Activated T-helper 1 cell treated with anti-CD3 and anti-CD28 coated beads, Interleukin-12 subunit alpha, Interleukin-12 subunit beta, Interleukin-2, Interleukin-4 antibody, amounts not matched to agents 30 ng/mL and 10 ng/mL and 1 ng/mL, durations not matched to agents 14 hours and 24 hours and 36 hours (primary cell): ENCODE measurements at regions of chr4 and their contacts with region 1.

Region 1: DNA sequence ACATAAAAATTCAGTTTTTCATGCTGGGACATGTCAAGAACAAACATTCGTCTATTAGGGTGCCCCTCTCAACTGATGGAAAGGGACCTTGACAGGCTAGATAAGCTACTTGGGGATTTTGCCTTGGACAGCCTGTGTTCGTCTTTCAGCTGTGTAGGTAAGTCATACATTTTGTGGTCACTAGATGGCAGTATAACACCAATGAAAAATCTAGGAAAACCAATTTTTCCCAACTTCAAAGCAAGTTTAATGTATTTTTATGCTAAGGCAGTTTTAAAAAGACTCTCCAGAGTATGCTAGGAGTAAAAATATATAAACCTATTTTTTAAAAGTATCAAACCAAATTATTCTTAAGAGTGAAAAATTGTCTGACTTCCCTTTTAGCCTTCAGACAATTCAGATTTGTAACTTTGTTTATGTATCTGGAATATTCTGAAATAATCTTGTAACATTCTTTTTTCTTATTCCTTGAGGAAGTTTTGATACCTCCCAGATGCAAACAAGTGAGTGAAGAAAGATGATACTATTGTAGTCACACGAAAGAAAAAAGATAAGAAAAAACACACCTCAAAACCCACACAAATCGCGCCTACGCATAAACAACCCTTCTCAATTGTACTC is 158.3 kb downstream of the CPE start:
- DNase-seq: no peak
- H3K4me3 Mint-ChIP-seq: no peak overlapping the region
- H3K27ac Mint-ChIP-seq: no peak overlapping the region
- H3K4me1 Mint-ChIP-seq: no peaks in the 10 kb centered on the region
- H3K27me3 Mint-ChIP-seq: peaks cover 8% of the 10 kb centered on the region

Region 2: GRCh38 chr4:165493359-165493758 is 43.8 kb before region 1 on chr4:
- intact Hi-C with region 1: loop called (anchors 1 kb)
- DNase-seq: peak; percentile 41
- H3K4me3 Mint-ChIP-seq: no peak overlapping the region
- H3K27ac Mint-ChIP-seq: no peak overlapping the region
- H3K4me1 Mint-ChIP-seq: peaks cover 5% of the 10 kb centered on the region
- H3K27me3 Mint-ChIP-seq: peaks cover 18% of the 10 kb centered on the region

Region 3: GRCh38 chr4:165612936-165613335 is 75.8 kb after region 1 on chr4:
- intact Hi-C with region 1: loop called (anchors 5 kb)
- DNase-seq: peak; percentile 5
- H3K4me3 Mint-ChIP-seq: no peak overlapping the region
- H3K27ac Mint-ChIP-seq: peak overlapping the region; percentile 51
- H3K4me1 Mint-ChIP-seq: peaks cover 30% of the 10 kb centered on the region
- H3K27me3 Mint-ChIP-seq: peaks cover 2% of the 10 kb centered on the region

Region 4: DNA sequence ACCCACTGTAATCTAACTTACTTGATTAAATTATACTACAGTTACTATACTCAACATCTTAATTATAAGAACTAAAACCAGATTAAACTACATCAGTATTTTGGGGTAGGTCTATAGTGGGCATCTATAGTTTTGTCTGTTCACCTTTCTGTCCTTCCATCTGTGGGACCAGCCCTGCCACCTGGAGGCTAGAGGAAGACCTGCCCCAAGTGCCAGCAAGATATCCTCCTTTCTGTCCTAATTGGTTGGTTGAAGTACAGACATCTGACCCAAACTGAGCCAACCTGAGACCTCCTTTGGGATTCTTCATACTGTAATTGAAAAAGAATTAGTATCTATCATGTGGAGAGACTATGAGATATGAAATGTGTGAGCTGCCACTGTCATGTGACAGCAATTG is 163.7 kb after region 1 on chr4:
- intact Hi-C with region 1: loop called (anchors 2 kb)
- DNase-seq: no peak
- H3K4me3 Mint-ChIP-seq: no peak overlapping the region
- H3K27ac Mint-ChIP-seq: no peak overlapping the region
- H3K4me1 Mint-ChIP-seq: no peaks in the 10 kb centered on the region
- H3K27me3 Mint-ChIP-seq: no peaks in the 10 kb centered on the region

Region 5: GRCh38 chr4:165881996-165882395 is 344.9 kb after region 1 on chr4:
- intact Hi-C with region 1: no loop called
- DNase-seq: no peak
- H3K4me3 Mint-ChIP-seq: no peak overlapping the region
- H3K27ac Mint-ChIP-seq: no peak overlapping the region
- H3K4me1 Mint-ChIP-seq: no peaks in the 10 kb centered on the region
- H3K27me3 Mint-ChIP-seq: peaks cover 8% of the 10 kb centered on the region

Region 6: GRCh38 chr4:166091912-166092510 is 554.9 kb after region 1 on chr4:
- intact Hi-C with region 1: loop called (anchors 1 kb)
- DNase-seq: no peak
- H3K4me3 Mint-ChIP-seq: no peak overlapping the region
- H3K27ac Mint-ChIP-seq: no peak overlapping the region
- H3K4me1 Mint-ChIP-seq: no peaks in the 10 kb centered on the region
- H3K27me3 Mint-ChIP-seq: no peaks in the 10 kb centered on the region